ENCODE measurements at regions of chr1 and their contacts with region 1.

Region 1: DNA sequence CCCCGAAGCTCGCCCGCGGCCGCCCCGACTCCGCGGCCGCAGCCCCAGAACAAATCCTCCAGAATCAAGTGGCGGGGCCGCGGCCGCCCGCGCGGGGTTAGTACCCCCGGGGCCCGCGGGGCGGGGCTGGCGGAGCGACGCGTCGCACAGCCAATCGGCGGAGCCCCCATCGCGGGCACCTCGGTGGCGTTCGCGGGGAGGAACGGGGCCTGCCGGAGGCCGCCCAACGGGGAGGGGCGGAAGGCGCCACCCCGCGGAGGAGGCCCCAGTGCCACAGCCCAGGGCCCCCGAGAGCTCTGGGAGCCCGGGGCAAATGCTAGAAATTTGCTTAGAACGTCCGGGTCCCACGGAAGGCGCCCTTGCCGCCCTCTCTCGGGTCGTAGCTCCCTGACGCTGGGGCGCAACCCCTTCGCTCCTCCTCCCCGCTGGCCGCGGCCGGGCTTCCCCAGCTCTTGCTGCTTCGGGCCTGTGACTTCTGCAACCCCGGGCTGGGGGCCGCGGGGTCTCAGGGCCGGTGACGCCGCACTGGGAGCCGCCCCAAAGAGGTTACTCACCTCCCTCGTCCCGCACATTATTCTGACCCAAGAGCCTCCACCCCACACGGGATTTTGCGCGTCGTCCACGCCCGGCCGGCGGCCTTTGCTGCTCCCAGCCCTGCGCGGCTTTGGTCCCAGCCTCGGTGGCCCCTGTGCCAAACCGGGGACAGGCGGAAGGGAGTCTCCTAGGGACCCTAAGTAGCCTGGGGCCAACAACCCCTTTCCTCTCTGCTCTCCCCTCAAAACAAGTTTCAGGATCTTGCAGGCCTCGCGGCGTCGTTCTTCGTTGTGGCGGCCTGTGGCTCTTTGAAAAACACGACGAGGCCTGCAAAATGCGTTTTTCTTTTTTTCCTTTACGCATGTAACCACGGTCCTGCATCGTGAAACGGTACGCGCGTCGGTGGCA is at the start of gene RUNX3:
- DNase-seq: peak; percentile 94
- H3K4me3 Mint-ChIP-seq: peak within 1 kb of the TSS; percentile 81
- H3K27ac Mint-ChIP-seq: peak within 1 kb of the TSS; percentile 91
- H3K4me1 Mint-ChIP-seq: peaks cover 64% of the 10 kb centered on the region
- H3K27me3 Mint-ChIP-seq: no peaks in the 10 kb centered on the region
- total RNA-seq, gene RUNX3: 153 to 155 TPM

Region 2: GRCh38 chr1:24744911-24745710 is 185.4 kb before region 1 on chr1 and contains the start of gene CLIC4:
- CTCF ChIA-PET with region 1: no interaction called
- POLR2A ChIA-PET with region 1: no interaction called
- intact Hi-C with region 1: loop called (anchors 5 kb)
- DNase-seq: peak; percentile 100
- H3K4me3 Mint-ChIP-seq: peak within 1 kb of the TSS; percentile 76
- H3K27ac Mint-ChIP-seq: peak within 1 kb of the TSS; percentile 58
- H3K4me1 Mint-ChIP-seq: peaks cover 34% of the 10 kb centered on the region
- H3K27me3 Mint-ChIP-seq: no peaks in the 10 kb centered on the region
- total RNA-seq, gene CLIC4: 25.5 to 26.3 TPM

Region 3: DNA sequence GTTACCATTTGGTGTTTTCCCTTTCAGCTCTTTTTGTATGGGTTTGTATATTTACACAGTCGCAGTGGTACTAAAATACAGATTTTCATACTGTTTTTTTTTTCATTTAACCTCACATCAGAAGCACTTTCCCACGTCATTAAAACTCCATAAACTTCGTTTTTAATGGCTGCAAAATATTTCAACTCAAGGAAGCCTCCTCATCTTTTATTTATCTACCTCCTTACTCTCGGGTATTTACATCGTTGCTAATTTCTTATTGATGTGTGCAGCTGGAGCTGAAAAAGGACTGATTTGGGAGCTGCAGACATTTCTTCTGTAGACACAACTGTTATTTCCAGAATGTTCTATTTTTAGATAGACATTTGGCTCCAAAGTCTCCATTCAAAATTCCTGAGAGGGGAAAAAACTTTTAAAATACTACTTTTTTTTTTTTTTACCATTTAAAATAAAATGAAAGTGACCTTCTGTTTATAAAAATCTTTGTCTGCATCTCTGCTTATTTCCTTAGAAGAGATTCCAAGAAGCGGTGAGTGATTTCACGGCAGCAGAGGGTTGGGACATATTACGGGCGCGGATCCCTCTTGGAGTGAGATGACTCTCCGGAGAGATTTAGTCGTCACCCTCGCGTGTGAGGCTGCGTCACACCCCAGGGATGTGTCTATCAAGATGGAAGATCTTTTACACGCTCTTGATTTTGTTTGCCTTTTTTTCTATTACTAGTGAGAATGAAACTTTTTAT is 10.5 kb before region 1 on chr1:
- CTCF ChIA-PET with region 1: interaction called, 11 read pairs
- POLR2A ChIA-PET with region 1: interaction called, 69 read pairs
- intact Hi-C with region 1: no loop called
- DNase-seq: peak; percentile 93
- H3K4me3 Mint-ChIP-seq: peak overlapping the region; percentile 50
- H3K27ac Mint-ChIP-seq: peak overlapping the region; percentile 98
- H3K4me1 Mint-ChIP-seq: peaks cover 89% of the 10 kb centered on the region
- H3K27me3 Mint-ChIP-seq: no peaks in the 10 kb centered on the region

Region 4: DNA sequence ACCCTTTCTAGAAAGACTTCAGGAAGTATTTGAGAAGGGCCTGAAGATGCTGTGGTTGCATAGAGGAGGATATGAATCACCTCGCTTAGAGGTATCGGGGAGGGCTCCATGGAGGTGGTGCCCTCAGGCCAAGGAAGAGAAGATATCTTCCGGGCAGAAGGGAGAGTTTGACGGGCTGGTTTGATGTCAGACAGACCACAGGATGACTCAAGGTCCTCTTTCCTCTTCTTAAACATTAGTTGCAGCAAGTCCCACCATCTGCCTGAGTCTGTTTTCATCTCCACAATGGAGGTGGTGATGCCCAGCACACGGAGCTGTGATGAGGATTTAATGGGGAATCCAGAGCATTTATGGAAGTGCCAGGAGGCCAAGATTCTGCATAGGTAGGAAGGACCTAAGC is 24.7 kb after region 1 on chr1:
- CTCF ChIA-PET with region 1: interaction called, 29 read pairs
- POLR2A ChIA-PET with region 1: interaction called, 10 read pairs
- intact Hi-C with region 1: loop called (anchors 1 kb)
- DNase-seq: peak; percentile 90
- H3K4me3 Mint-ChIP-seq: peak overlapping the region; percentile 83
- H3K27ac Mint-ChIP-seq: peak overlapping the region; percentile 89
- H3K4me1 Mint-ChIP-seq: peaks cover 90% of the 10 kb centered on the region
- H3K27me3 Mint-ChIP-seq: no peaks in the 10 kb centered on the region

Region 5: GRCh38 chr1:25022361-25023189 is 92.1 kb after region 1 on chr1:
- CTCF ChIA-PET with region 1: interaction called, 12 read pairs
- POLR2A ChIA-PET with region 1: interaction called, 13 read pairs
- intact Hi-C with region 1: loop called (anchors 2 kb)
- DNase-seq: peak; percentile 97
- H3K4me3 Mint-ChIP-seq: peak overlapping the region; percentile 77
- H3K27ac Mint-ChIP-seq: peak overlapping the region; percentile 97
- H3K4me1 Mint-ChIP-seq: peaks cover 84% of the 10 kb centered on the region
- H3K27me3 Mint-ChIP-seq: no peaks in the 10 kb centered on the region

Region 6: GRCh38 chr1:25239681-25240541 is 309.4 kb after region 1 on chr1:
- CTCF ChIA-PET with region 1: interaction called, 4 read pairs
- POLR2A ChIA-PET with region 1: no interaction called
- intact Hi-C with region 1: loop called (anchors 10 kb)
- DNase-seq: peak; percentile 97
- H3K4me3 Mint-ChIP-seq: peak overlapping the region; percentile 84
- H3K27ac Mint-ChIP-seq: peak overlapping the region; percentile 96
- H3K4me1 Mint-ChIP-seq: peaks cover 51% of the 10 kb centered on the region
- H3K27me3 Mint-ChIP-seq: no peaks in the 10 kb centered on the region